CD4-positive, alpha-beta T cell (primary cell): ENCODE measurements at regions of chr18 and their contacts with region 1.

Region 1: GRCh38 chr18:31954349-31954748 is 11.4 kb upstream of the TRAPPC8 start:
- DNase-seq: no peak
- ATAC-seq: no peak
- H3K4me3 ChIP-seq: no peak overlapping the region
- H3K4me3 Mint-ChIP-seq: no peak overlapping the region
- H3K27ac ChIP-seq: no peak overlapping the region
- H3K27ac Mint-ChIP-seq: no peak overlapping the region
- H3K4me1 ChIP-seq: no peaks in the 10 kb centered on the region
- H3K4me1 Mint-ChIP-seq: no peaks in the 10 kb centered on the region
- H3K27me3 ChIP-seq: no peaks in the 10 kb centered on the region
- H3K27me3 Mint-ChIP-seq: no peaks in the 10 kb centered on the region
- CTCF ChIP-seq: no peak

Region 2: GRCh38 chr18:31741097-31741735 is 213.1 kb before region 1 on chr18:
- CTCF ChIA-PET with region 1: no interaction called
- POLR2A ChIA-PET with region 1: no interaction called
- intact Hi-C with region 1: loop called (anchors 1 to 5 kb)
- DNase-seq: peak; percentile 11 to 71 (median 46)
- ATAC-seq: peak; percentile 34
- H3K4me3 ChIP-seq: no peak overlapping the region
- H3K4me3 Mint-ChIP-seq: no peak overlapping the region
- H3K27ac ChIP-seq: no peak overlapping the region
- H3K27ac Mint-ChIP-seq: no peak overlapping the region
- H3K4me1 ChIP-seq: no peaks in the 10 kb centered on the region
- H3K4me1 Mint-ChIP-seq: no peaks in the 10 kb centered on the region
- H3K27me3 ChIP-seq: no peaks in the 10 kb centered on the region
- H3K27me3 Mint-ChIP-seq: peaks cover 4% of the 10 kb centered on the region
- CTCF ChIP-seq: peak; percentile 95

Region 3: DNA sequence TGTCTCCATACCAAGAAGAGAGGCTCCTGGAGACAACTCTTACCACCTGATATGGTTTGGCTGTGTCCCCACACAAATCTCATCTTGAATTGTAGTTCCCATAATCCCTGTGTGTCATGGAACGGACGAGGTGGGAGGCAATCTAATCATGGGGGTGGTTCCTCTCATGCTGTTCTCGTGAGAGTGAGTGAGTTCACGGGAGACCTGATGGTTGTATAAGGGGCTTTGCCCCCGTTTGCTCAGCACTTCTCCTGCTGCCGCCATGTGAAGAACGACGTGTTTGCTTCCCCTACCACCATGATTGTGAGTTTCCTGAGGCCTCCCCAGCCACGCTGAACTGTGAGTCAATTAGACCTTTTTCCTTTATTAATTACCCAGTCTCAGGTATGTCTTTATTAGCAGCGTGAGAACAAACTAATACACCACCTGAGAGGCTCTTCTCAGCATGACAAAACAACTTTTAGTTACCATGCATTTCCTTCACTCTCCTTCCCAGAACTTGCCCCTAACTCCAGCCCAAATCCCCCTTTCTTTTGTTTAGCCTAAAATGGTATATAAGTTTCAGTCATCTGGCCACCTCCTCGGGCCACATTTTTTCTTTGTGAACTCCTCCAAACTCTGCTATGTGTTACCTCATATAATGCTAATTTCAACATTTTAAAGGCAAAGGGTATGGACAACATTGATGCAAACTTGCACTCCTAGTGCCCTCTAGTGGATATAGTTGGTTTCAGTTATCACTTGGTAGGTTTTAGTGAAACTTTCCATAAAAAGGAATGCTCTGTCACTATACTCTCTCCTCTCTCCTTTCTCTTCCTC is 135.0 kb before region 1 on chr18:
- CTCF ChIA-PET with region 1: no interaction called
- POLR2A ChIA-PET with region 1: no interaction called
- intact Hi-C with region 1: loop called in 1 of 2 experiments (anchors 5 kb)
- DNase-seq: peak in 3 of 14 experiments; percentile 36 to 51 (median 43)
- ATAC-seq: no peak
- H3K4me3 ChIP-seq: no peak overlapping the region
- H3K4me3 Mint-ChIP-seq: no peak overlapping the region
- H3K27ac ChIP-seq: no peak overlapping the region
- H3K27ac Mint-ChIP-seq: no peak overlapping the region
- H3K4me1 ChIP-seq: no peaks in the 10 kb centered on the region
- H3K4me1 Mint-ChIP-seq: no peaks in the 10 kb centered on the region
- H3K27me3 ChIP-seq: no peaks in the 10 kb centered on the region
- H3K27me3 Mint-ChIP-seq: no peaks in the 10 kb centered on the region
- CTCF ChIP-seq: peak; percentile 89

Region 4: DNA sequence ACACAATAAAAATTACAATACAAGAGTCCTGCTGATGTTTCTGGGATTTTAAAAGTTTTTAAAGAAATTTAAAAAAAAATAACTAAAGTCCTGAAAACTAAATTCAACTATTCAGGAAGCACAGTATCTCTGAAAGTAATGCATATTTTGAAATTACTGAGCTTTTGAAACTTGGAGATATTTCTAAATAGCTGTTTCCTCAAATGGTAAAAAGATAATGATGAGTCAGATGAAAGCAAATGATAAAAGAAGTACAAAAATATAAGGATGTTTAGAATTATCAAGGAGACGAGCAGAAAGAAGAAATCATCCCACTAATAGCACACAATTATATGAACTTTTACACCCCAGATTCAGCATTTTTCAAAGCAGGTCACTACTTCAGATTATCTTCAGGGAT is 103.5 kb before region 1 on chr18:
- CTCF ChIA-PET with region 1: interaction called, 4 read pairs
- POLR2A ChIA-PET with region 1: no interaction called
- intact Hi-C with region 1: loop called in 1 of 2 experiments (anchors 5 kb)
- DNase-seq: no peak
- ATAC-seq: no peak
- H3K4me3 ChIP-seq: no peak overlapping the region
- H3K4me3 Mint-ChIP-seq: no peak overlapping the region
- H3K27ac ChIP-seq: no peak overlapping the region
- H3K27ac Mint-ChIP-seq: no peak overlapping the region
- H3K4me1 ChIP-seq: no peaks in the 10 kb centered on the region
- H3K4me1 Mint-ChIP-seq: no peaks in the 10 kb centered on the region
- H3K27me3 ChIP-seq: no peaks in the 10 kb centered on the region
- H3K27me3 Mint-ChIP-seq: no peaks in the 10 kb centered on the region
- CTCF ChIP-seq: no peak

Region 5: GRCh38 chr18:31876707-31877106 is 77.6 kb before region 1 on chr18:
- CTCF ChIA-PET with region 1: no interaction called
- POLR2A ChIA-PET with region 1: no interaction called
- intact Hi-C with region 1: loop called in 1 of 2 experiments (anchors 5 kb)
- DNase-seq: no peak
- ATAC-seq: no peak
- H3K4me3 ChIP-seq: no peak overlapping the region
- H3K4me3 Mint-ChIP-seq: no peak overlapping the region
- H3K27ac ChIP-seq: no peak overlapping the region
- H3K27ac Mint-ChIP-seq: no peak overlapping the region
- H3K4me1 ChIP-seq: no peaks in the 10 kb centered on the region
- H3K4me1 Mint-ChIP-seq: peaks cover 28% of the 10 kb centered on the region
- H3K27me3 ChIP-seq: no peaks in the 10 kb centered on the region
- H3K27me3 Mint-ChIP-seq: no peaks in the 10 kb centered on the region
- CTCF ChIP-seq: no peak

Region 6: DNA sequence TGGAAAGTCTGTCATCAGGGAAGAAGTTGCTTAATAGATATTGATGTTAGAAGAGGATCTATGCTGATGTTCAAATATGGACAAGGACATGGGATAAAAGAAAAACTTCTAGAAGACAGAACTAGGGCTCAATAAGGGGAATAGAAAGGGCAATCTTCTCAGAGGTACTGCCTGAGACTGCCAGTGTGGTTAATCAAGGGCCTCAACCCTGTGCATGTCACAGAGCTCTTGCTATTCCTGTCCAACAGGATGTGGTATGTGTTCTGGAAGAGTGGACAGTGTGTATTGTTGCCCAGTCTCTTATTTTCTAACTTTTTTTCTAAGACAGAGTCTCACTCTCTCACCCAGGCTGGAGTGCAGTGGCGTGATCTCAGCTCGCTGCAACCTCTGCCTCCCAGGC is 36.5 kb after region 1 on chr18:
- CTCF ChIA-PET with region 1: no interaction called
- POLR2A ChIA-PET with region 1: no interaction called
- intact Hi-C with region 1: loop called in 1 of 2 experiments (anchors 5 kb)
- DNase-seq: no peak
- ATAC-seq: no peak
- H3K4me3 ChIP-seq: no peak overlapping the region
- H3K4me3 Mint-ChIP-seq: no peak overlapping the region
- H3K27ac ChIP-seq: no peak overlapping the region
- H3K27ac Mint-ChIP-seq: no peak overlapping the region
- H3K4me1 ChIP-seq: no peaks in the 10 kb centered on the region
- H3K4me1 Mint-ChIP-seq: no peaks in the 10 kb centered on the region
- H3K27me3 ChIP-seq: no peaks in the 10 kb centered on the region
- H3K27me3 Mint-ChIP-seq: no peaks in the 10 kb centered on the region
- CTCF ChIP-seq: no peak